ENCODE measurements at regions of chr1 and their contacts with region 1.

Region 1: DNA sequence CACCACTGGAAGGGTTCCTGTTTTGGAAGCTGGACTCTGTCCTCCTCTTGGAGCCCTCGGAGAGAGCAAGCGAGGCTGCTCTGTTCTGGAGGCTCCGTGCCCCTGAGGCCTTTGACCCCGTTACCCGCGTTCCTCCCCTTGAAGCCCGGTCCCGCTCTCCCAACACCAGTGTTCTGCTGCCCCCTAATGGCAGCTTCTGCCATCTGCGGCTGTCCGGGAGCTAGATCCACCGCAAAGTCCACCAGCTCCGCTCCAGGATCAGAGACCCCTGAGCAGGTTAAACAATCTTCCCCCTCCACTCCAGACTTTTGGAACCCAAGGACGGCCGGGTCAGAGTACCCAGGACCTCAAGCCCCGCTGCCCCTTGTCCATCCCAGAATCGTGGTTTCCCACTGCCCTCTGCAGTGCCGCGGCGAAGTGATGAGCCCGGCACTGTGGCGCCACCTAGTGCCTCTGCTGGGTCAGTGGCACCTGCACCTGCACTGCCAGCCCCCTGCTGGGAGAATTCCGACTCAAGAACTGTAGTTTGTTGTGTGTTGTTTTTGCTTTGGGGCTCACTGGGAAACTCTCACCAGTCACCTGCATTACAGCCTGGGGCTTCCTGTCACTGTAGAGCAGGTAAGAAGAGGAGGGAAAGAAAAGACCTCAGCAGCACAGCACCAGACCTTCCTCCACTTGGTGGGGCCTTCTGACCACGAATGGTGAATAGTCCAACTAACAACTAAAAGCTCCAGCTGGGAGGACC is 63.5 kb upstream of the NFASC start:
- DNase-seq: peak; percentile 81
- H3K4me3 ChIP-seq: peak overlapping the region in 2 of 3 experiments; percentile 33 to 40
- H3K27ac ChIP-seq: no peak overlapping the region
- H3K4me1 ChIP-seq: no peaks in the 10 kb centered on the region
- H3K27me3 ChIP-seq: peaks cover 2 to 3% of the 10 kb centered on the region in 2 experiments
- CTCF ChIP-seq: peak; percentile 91 to 100
- POLR2A ChIP-seq: no peak

Region 2: DNA sequence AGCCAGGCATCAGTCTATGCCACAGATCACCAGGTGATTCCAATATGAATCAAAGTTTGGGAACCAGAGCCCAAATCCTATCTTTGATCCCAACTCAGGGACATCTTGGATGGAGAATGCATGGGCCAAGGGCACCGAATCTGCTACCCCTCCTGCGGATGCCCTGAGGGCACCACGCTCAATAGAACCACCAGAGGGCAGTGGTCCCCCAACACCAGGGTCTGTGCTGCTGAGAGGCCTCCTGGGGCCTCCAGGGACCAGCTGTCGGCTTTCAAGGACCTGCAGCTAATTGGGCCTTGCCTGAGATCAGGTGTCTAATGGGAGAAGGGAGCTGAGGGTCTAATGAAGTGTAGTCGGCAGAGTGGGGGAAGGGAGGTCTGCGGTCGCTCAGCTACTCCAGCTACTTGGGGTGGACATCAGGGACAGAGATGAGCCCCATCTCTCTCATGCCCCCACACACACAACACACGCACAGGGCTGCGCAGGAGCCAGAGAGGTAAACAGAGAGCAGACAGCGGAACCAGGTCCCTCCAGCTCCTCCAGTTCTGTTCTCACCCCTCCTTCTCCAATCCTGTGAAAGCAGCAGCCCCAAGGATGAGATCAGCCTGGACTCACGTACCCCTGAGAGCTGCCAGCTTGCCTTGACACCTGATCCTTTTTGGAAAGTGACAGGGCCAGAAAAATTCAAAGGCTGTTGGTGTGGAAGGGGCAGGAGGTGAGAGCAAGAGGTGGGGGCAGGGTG is 360.6 kb before region 1 on chr1:
- CTCF ChIA-PET with region 1: interaction called, 17 read pairs
- POLR2A ChIA-PET with region 1: no interaction called
- dilution Hi-C with region 1: no loop called
- intact Hi-C with region 1: loop called (anchors 10 kb)
- DNase-seq: peak; percentile 65
- H3K4me3 ChIP-seq: no peak overlapping the region
- H3K27ac ChIP-seq: no peak overlapping the region
- H3K4me1 ChIP-seq: peaks cover 9% of the 10 kb centered on the region
- H3K27me3 ChIP-seq: no peaks in the 10 kb centered on the region
- CTCF ChIP-seq: peak; percentile 73 to 82
- POLR2A ChIP-seq: no peak

Region 3: GRCh38 chr1:204565617-204566582 is 241.2 kb before region 1 on chr1:
- CTCF ChIA-PET with region 1: interaction called, 265 read pairs
- POLR2A ChIA-PET with region 1: interaction called, 3 read pairs
- dilution Hi-C with region 1: no loop called
- intact Hi-C with region 1: loop called (anchors 1 kb)
- DNase-seq: peak; percentile 75
- H3K4me3 ChIP-seq: no peak overlapping the region
- H3K27ac ChIP-seq: no peak overlapping the region
- H3K4me1 ChIP-seq: no peaks in the 10 kb centered on the region
- H3K27me3 ChIP-seq: no peaks in the 10 kb centered on the region
- CTCF ChIP-seq: peak; percentile 64 to 71
- POLR2A ChIP-seq: no peak

Region 4: GRCh38 chr1:204763706-204764427 is 43.2 kb before region 1 on chr1:
- CTCF ChIA-PET with region 1: interaction called, 18 read pairs
- POLR2A ChIA-PET with region 1: no interaction called
- dilution Hi-C with region 1: no loop called
- intact Hi-C with region 1: no loop called
- DNase-seq: peak; percentile 53
- H3K4me3 ChIP-seq: no peak overlapping the region
- H3K27ac ChIP-seq: no peak overlapping the region
- H3K4me1 ChIP-seq: no peaks in the 10 kb centered on the region
- H3K27me3 ChIP-seq: peaks cover 3 to 16% of the 10 kb centered on the region in 2 experiments
- CTCF ChIP-seq: peak; percentile 80 to 87
- POLR2A ChIP-seq: no peak

Region 5: GRCh38 chr1:204828338-204828850 is 21.3 kb after region 1 on chr1:
- CTCF ChIA-PET with region 1: interaction called, 23 read pairs
- POLR2A ChIA-PET with region 1: no interaction called
- dilution Hi-C with region 1: no loop called
- intact Hi-C with region 1: no loop called
- DNase-seq: peak; percentile 2
- H3K4me3 ChIP-seq: no peak overlapping the region
- H3K27ac ChIP-seq: no peak overlapping the region
- H3K4me1 ChIP-seq: no peaks in the 10 kb centered on the region
- H3K27me3 ChIP-seq: peaks cover 25 to 29% of the 10 kb centered on the region in 2 experiments
- CTCF ChIP-seq: no peak
- POLR2A ChIP-seq: no peak

Region 6: GRCh38 chr1:205325334-205325884 is 518.3 kb after region 1 on chr1:
- CTCF ChIA-PET with region 1: no interaction called
- POLR2A ChIA-PET with region 1: no interaction called
- dilution Hi-C with region 1: no loop called
- intact Hi-C with region 1: no loop called
- DNase-seq: peak; percentile 84
- H3K4me3 ChIP-seq: no peak overlapping the region
- H3K27ac ChIP-seq: no peak overlapping the region
- H3K4me1 ChIP-seq: peaks cover 6% of the 10 kb centered on the region
- H3K27me3 ChIP-seq: peaks cover 6 to 15% of the 10 kb centered on the region in 2 experiments
- CTCF ChIP-seq: peak; percentile 54 to 75
- POLR2A ChIP-seq: no peak

Measured in endothelial cell of umbilical vein (primary cell).